ENCODE measurements at regions of chr1 and their contacts with region 1.

Region 1: DNA sequence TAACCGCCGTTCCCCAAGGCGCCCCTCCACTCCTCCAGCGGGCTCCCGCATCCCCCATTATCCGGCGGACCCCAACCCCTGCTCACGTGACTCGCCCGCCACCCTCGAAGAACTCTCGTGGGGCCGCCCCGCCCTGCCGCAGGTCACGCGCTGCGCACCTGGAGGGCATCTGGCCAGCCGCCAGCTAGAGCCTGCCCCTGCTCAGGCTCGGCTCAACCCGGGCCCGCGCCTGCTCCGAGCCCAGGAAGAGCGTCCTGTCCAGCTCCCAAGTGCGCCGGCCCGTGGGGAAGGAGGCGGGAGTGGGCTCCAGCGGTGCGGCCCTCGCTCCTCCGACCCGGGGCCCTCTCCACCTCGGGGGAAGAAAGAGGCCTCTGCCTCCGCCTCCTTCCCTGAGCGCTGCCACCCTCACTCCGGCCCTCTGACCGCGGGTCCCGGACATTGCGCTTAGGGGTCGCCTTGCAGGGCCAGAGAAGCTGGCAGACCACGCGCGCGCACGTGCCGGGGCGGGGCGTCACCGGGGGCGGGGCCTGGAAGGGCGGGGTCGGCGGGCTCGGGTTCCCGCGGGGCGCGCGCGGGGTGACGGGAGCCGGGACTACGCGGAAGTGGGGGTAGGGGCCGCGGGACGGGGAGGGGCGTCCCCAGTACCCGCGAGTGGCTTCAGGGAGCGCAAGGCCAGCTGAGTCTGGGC is 28.4 kb downstream of the HMGN2 start:
- DNase-seq: peak; percentile 97
- H3K4me3 Mint-ChIP-seq: peak overlapping the region; percentile 92
- H3K27ac Mint-ChIP-seq: peak overlapping the region; percentile 95
- H3K4me1 Mint-ChIP-seq: peaks cover 13% of the 10 kb centered on the region
- H3K27me3 Mint-ChIP-seq: no peaks in the 10 kb centered on the region

Region 2: GRCh38 chr1:26431979-26432695 is 68.5 kb before region 1 on chr1 and contains the start of gene DHDDS:
- intact Hi-C with region 1: loop called (anchors 2 kb)
- DNase-seq: peak; percentile 100
- H3K4me3 Mint-ChIP-seq: peak within 1 kb of the TSS; percentile 98
- H3K27ac Mint-ChIP-seq: peak within 1 kb of the TSS; percentile 95
- H3K4me1 Mint-ChIP-seq: peaks cover 17% of the 10 kb centered on the region
- H3K27me3 Mint-ChIP-seq: peaks cover 5% of the 10 kb centered on the region
- total RNA-seq, gene DHDDS: 57.0 and 60.2 TPM in 2 replicates

Region 3: DNA sequence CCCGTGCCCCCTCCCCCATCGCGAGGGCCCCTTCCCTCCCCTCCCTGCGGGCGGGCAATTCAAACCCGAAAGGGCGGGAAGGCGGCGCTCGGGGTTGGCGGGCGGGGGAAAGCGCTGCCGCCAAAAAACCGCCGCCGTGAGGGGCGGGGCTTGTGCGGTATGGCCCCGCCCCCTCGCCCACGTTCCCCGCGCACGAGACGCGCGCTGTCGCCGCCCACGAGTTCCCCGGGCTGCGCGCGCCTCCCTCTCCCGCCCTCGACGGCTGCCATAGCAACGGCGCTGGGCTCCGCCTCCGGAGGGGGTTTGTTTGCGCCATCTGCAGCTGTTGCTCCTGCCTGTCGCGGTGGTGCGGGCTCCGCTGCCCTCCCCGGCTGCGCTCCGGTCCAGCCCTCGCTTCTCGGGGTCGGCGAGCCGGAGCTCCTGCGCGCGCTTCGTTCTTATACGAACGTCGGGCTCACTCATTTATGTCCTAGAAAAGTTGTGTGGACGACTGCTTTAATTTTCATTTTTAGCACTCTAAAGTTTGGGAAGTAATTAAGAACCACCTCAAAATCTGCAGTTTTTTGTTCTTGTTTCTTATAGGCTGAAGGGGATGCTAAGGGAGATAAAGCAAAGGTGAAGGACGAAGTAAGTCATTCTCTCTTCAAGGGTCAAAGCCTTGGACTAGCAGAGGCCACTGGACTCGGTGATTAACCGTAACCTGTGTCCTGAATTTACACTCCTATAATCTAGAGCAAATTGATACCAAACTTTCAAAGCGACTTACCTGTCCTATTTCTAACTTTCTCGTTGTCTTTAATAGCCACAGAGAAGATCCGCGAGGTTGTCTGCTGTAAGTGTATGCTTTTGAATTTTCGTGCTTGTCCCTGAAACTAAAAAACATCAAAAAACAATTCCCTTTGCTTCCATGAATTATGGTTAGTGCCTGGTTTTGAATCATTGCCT is 27.5 kb before region 1 on chr1:
- intact Hi-C with region 1: loop called (anchors 1 kb)
- DNase-seq: peak; percentile 99
- H3K4me3 Mint-ChIP-seq: peak overlapping the region; percentile 94
- H3K27ac Mint-ChIP-seq: peak overlapping the region; percentile 84
- H3K4me1 Mint-ChIP-seq: peaks cover 48% of the 10 kb centered on the region
- H3K27me3 Mint-ChIP-seq: peaks cover 2% of the 10 kb centered on the region

Region 4: DNA sequence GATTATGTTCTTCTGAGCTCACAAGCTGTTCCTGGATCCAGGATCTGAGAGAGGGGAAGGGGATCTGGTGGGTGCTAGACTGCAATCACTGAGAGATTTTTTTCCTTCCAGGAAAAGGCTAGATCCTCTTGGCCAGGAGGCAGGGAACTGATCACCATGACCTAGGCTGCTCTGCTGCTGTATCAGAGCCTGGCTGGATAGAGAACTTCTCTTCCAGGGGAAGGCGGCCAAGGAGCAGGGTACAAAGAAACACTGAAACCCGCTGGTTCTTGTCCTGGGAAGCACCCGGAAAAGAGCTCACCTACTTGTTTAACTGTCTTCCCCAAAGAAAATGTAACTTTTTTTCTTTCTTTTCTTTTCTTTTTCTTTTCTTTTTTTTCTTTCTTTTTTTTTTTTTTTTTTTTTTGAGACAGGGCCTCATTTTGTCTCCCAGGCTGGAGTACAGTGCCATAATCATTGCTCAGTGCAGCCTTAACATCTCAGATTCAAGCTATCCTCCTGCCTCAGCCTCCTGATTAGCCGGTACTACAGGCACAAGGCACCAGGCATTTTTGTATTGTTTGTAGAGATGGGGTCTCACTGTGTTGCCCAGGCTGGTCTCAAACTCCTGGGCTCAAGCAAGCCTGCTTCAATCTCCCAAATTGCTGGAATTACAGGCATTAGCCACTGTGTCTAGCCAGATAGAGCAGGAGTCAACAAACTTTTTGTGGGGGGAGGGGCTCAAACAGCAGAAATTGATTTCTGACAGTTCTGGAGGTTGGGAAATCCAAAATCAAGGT is 16.5 kb after region 1 on chr1:
- intact Hi-C with region 1: no loop called
- DNase-seq: no peak
- H3K4me3 Mint-ChIP-seq: no peak overlapping the region
- H3K27ac Mint-ChIP-seq: no peak overlapping the region
- H3K4me1 Mint-ChIP-seq: no peaks in the 10 kb centered on the region
- H3K27me3 Mint-ChIP-seq: peaks cover 22% of the 10 kb centered on the region

Region 5: GRCh38 chr1:26529655-26530409 is 29.2 kb after region 1 on chr1 and contains the start of gene RPS6KA1:
- intact Hi-C with region 1: loop called (anchors 2 kb)
- DNase-seq: peak; percentile 93
- H3K4me3 Mint-ChIP-seq: peak within 1 kb of the TSS; percentile 89
- H3K27ac Mint-ChIP-seq: peak within 1 kb of the TSS; percentile 90
- H3K4me1 Mint-ChIP-seq: peaks cover 29% of the 10 kb centered on the region
- H3K27me3 Mint-ChIP-seq: peaks cover 8% of the 10 kb centered on the region
- total RNA-seq, gene RPS6KA1: 264 and 277 TPM in 2 replicates

Region 6: GRCh38 chr1:26541816-26542711 is 41.4 kb after region 1 on chr1:
- intact Hi-C with region 1: loop called (anchors 1 kb)
- DNase-seq: peak; percentile 93
- H3K4me3 Mint-ChIP-seq: peak overlapping the region; percentile 83
- H3K27ac Mint-ChIP-seq: peak overlapping the region; percentile 91
- H3K4me1 Mint-ChIP-seq: peaks cover 78% of the 10 kb centered on the region
- H3K27me3 Mint-ChIP-seq: no peaks in the 10 kb centered on the region

Region 7: DNA sequence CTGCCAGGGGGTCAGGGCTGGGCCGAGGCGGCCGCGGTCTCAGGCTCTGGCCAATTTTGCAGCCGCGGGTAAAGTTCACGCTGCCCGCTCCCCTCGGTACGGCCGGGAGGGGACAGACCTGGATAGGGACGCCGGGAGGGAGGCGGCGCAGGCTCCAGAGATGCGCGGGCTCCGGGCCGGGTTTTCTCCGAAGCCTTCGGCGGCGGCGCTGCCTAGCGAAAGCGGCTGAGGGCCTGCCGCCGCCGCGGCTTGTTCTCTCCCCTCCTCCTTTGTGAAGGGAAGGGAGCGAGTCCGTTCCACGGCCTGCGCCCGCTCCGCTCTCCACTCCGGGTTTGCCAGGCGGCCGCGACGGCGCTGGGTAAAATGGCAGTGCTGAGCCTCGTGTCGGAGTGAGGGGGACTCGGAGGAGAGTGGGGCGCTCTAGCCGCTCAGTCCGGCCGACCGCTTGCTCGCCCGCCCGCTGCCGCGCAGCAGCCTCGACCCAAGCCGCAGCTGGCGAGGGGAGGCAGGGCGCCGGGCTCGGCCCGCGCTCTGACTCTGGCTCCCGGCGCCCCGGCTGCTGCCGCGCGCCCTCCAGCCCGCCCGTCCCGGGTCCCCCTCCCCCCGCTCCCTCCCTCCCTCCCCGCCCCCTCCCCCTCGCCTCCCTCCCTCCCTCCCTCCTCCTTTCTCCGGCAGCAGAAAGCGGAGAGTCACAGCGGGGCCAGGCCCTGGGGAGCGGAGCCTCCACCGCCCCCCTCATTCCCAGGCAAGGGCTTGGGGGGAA is 194.9 kb after region 1 on chr1 and contains the start of gene ARID1A:
- intact Hi-C with region 1: loop called (anchors 5 kb)
- DNase-seq: peak; percentile 99
- H3K4me3 Mint-ChIP-seq: peak within 1 kb of the TSS; percentile 94
- H3K27ac Mint-ChIP-seq: peak within 1 kb of the TSS; percentile 99
- H3K4me1 Mint-ChIP-seq: peaks cover 35% of the 10 kb centered on the region
- H3K27me3 Mint-ChIP-seq: no peaks in the 10 kb centered on the region
- total RNA-seq, gene ARID1A: 111 and 117 TPM in 2 replicates

Region 8: DNA sequence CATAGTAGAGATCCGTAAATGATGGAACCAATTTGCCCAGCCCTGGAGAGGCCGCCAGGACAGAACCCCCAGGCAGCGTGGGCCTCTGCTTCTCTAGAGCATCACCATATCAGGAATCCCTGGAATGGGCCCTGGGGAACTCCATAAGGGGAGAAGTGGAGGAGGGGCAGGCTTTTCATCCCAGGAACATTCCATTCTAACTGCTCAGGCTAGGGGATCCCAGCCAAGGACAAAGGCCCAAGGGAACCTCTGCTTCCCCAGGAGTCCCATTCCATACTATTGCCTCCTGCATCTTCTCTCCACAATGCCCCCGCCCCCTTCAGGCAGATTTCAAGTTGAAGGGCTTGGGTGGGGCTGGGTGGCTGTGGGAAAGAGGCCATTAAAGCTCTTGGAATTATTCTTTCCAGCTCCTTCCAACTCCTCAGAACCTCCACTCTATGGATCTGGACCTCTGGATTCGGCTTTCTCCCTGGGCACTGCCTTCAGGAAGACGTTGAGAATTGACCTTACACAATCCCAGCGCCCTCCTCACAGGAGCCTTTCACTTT is 498.9 kb after region 1 on chr1:
- intact Hi-C with region 1: no loop called
- DNase-seq: no peak
- H3K4me3 Mint-ChIP-seq: no peak overlapping the region
- H3K27ac Mint-ChIP-seq: no peak overlapping the region
- H3K4me1 Mint-ChIP-seq: peaks cover 8% of the 10 kb centered on the region
- H3K27me3 Mint-ChIP-seq: peaks cover 35% of the 10 kb centered on the region